T-cell (primary cell): ENCODE measurements at regions of chr16 and their contacts with region 1.

Region 1: GRCh38 chr16:73531021-73531420 is 483.1 kb upstream of the ZFHX3 start:
- DNase-seq: no peak
- ATAC-seq: no peak
- H3K4me3 ChIP-seq: no peak overlapping the region
- H3K4me3 Mint-ChIP-seq: no peak overlapping the region
- H3K27ac ChIP-seq: no peak overlapping the region
- H3K27ac Mint-ChIP-seq: no peak overlapping the region
- H3K4me1 ChIP-seq: no peaks in the 10 kb centered on the region
- H3K4me1 Mint-ChIP-seq: no peaks in the 10 kb centered on the region
- H3K27me3 ChIP-seq: no peaks in the 10 kb centered on the region
- H3K27me3 Mint-ChIP-seq: peaks cover 0 to 3% of the 10 kb centered on the region in 2 donors

Region 2: GRCh38 chr16:73254983-73255382 is 276.0 kb before region 1 on chr16:
- CTCF ChIA-PET with region 1: no interaction called
- POLR2A ChIA-PET with region 1: no interaction called
- DNase-seq: no peak
- ATAC-seq: no peak
- H3K4me3 ChIP-seq: no peak overlapping the region
- H3K4me3 Mint-ChIP-seq: no peak overlapping the region
- H3K27ac ChIP-seq: no peak overlapping the region
- H3K27ac Mint-ChIP-seq: no peak overlapping the region
- H3K4me1 ChIP-seq: no peaks in the 10 kb centered on the region
- H3K4me1 Mint-ChIP-seq: no peaks in the 10 kb centered on the region
- H3K27me3 ChIP-seq: no peaks in the 10 kb centered on the region
- H3K27me3 Mint-ChIP-seq: no peaks in the 10 kb centered on the region

Region 3: GRCh38 chr16:73510852-73511251 is 20.2 kb before region 1 on chr16:
- CTCF ChIA-PET with region 1: no interaction called
- POLR2A ChIA-PET with region 1: no interaction called
- DNase-seq: no peak
- ATAC-seq: no peak
- H3K4me3 ChIP-seq: no peak overlapping the region
- H3K4me3 Mint-ChIP-seq: no peak overlapping the region
- H3K27ac ChIP-seq: no peak overlapping the region
- H3K27ac Mint-ChIP-seq: no peak overlapping the region
- H3K4me1 ChIP-seq: no peaks in the 10 kb centered on the region
- H3K4me1 Mint-ChIP-seq: no peaks in the 10 kb centered on the region
- H3K27me3 ChIP-seq: no peaks in the 10 kb centered on the region
- H3K27me3 Mint-ChIP-seq: peaks cover 0 to 1% of the 10 kb centered on the region in 2 donors

Region 4: GRCh38 chr16:73605309-73605708 is 74.3 kb after region 1 on chr16:
- CTCF ChIA-PET with region 1: no interaction called
- POLR2A ChIA-PET with region 1: interaction called in 1 of 2 experiments, 13 read pairs
- DNase-seq: no peak
- ATAC-seq: no peak
- H3K4me3 ChIP-seq: no peak overlapping the region
- H3K4me3 Mint-ChIP-seq: no peak overlapping the region
- H3K27ac ChIP-seq: no peak overlapping the region
- H3K27ac Mint-ChIP-seq: no peak overlapping the region
- H3K4me1 ChIP-seq: no peaks in the 10 kb centered on the region
- H3K4me1 Mint-ChIP-seq: no peaks in the 10 kb centered on the region
- H3K27me3 ChIP-seq: no peaks in the 10 kb centered on the region
- H3K27me3 Mint-ChIP-seq: peaks cover 1 to 10% of the 10 kb centered on the region in 2 donors